Psoas muscle (tissue), 8 donors: ENCODE measurements at regions of chr10 and their contacts with region 1.

Region 1: GRCh38 chr10:133309111-133309719 is 501 bp downstream of the ZNF511 start:
- DNase-seq: peak; percentile 93 to 98
- ATAC-seq: peak; percentile 93 to 96 (median 95)
- H3K4me3 ChIP-seq: peak overlapping the region; percentile 97
- H3K27ac ChIP-seq: peak overlapping the region; percentile 99
- H3K4me1 ChIP-seq: peaks cover 26% of the 10 kb centered on the region
- H3K27me3 ChIP-seq: no peaks in the 10 kb centered on the region
- CTCF ChIP-seq: no peak

Region 2: GRCh38 chr10:132469197-132469884 is 839.9 kb before region 1 on chr10:
- intact Hi-C with region 1: no loop called
- DNase-seq: peak; percentile 31 to 70
- ATAC-seq: peak; percentile 12 to 51 (median 41)
- H3K4me3 ChIP-seq: no peak overlapping the region
- H3K27ac ChIP-seq: no peak overlapping the region
- H3K4me1 ChIP-seq: peaks cover 17% of the 10 kb centered on the region
- H3K27me3 ChIP-seq: no peaks in the 10 kb centered on the region
- CTCF ChIP-seq: no peak

Region 3: GRCh38 chr10:133261726-133262325 is 47.4 kb before region 1 on chr10:
- intact Hi-C with region 1: loop called in 1 of 2 experiments (anchors 2 kb)
- DNase-seq: peak; percentile 91 to 95
- ATAC-seq: peak; percentile 88 to 90 (median 88)
- H3K4me3 ChIP-seq: peak overlapping the region; percentile 90
- H3K27ac ChIP-seq: peak overlapping the region; percentile 92
- H3K4me1 ChIP-seq: peaks cover 15% of the 10 kb centered on the region
- H3K27me3 ChIP-seq: no peaks in the 10 kb centered on the region
- CTCF ChIP-seq: no peak

Region 4: GRCh38 chr10:133373104-133373624 is 63.9 kb after region 1 on chr10 and contains the start of gene ECHS1:
- intact Hi-C with region 1: loop called in 1 of 2 experiments (anchors 5 kb)
- DNase-seq: peak; percentile 97 to 98
- ATAC-seq: peak; percentile 99 to 100 (median 99)
- H3K4me3 ChIP-seq: peak within 1 kb of the TSS; percentile 75
- H3K27ac ChIP-seq: peak within 1 kb of the TSS; percentile 90
- H3K4me1 ChIP-seq: peaks cover 11% of the 10 kb centered on the region
- H3K27me3 ChIP-seq: no peaks in the 10 kb centered on the region
- CTCF ChIP-seq: no peak
- total RNA-seq, gene ECHS1: 83.2 to 151 (median 120) TPM

Region 5: DNA sequence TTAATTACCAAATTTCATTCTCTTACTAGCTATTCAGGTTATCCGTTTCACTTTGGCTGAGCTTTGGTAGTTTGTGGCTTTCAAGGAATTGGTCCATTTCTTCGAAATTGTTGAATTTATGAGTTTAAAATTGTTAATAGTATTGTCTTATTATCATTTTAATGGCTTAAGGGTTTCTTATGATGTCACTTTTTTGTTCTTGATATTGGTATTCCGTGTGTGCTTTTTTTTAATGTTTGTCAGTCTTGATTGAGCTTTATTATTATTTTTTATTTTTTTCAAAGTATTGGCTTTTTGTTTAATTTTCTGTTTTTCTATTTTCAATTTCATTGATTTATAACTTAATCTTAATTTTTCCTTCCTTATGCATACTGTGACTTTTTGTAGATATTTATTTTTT is 291.4 kb after region 1 on chr10:
- intact Hi-C with region 1: no loop called
- DNase-seq: no peak
- ATAC-seq: no peak
- H3K4me3 ChIP-seq: no peak overlapping the region
- H3K27ac ChIP-seq: no peak overlapping the region
- H3K4me1 ChIP-seq: no peaks in the 10 kb centered on the region
- H3K27me3 ChIP-seq: peaks cover 5 to 11% (median 7%) of the 10 kb centered on the region in 3 donors
- CTCF ChIP-seq: no peak